Right ventricle myocardium superior (tissue), 1 donor: ENCODE measurements at regions of chr3 and their contacts with region 1.

Region 1: GRCh38 chr3:171459942-171460724 is at the start of gene TNIK:
- DNase-seq: peak; percentile 95
- ATAC-seq: peak; percentile 95
- total RNA-seq, gene TNIK: 22.5 TPM

Region 2: GRCh38 chr3:171334465-171334811 is 125.7 kb before region 1 on chr3:
- intact Hi-C with region 1: no loop called
- DNase-seq: peak; percentile 65
- ATAC-seq: peak; percentile 88

Region 3: DNA sequence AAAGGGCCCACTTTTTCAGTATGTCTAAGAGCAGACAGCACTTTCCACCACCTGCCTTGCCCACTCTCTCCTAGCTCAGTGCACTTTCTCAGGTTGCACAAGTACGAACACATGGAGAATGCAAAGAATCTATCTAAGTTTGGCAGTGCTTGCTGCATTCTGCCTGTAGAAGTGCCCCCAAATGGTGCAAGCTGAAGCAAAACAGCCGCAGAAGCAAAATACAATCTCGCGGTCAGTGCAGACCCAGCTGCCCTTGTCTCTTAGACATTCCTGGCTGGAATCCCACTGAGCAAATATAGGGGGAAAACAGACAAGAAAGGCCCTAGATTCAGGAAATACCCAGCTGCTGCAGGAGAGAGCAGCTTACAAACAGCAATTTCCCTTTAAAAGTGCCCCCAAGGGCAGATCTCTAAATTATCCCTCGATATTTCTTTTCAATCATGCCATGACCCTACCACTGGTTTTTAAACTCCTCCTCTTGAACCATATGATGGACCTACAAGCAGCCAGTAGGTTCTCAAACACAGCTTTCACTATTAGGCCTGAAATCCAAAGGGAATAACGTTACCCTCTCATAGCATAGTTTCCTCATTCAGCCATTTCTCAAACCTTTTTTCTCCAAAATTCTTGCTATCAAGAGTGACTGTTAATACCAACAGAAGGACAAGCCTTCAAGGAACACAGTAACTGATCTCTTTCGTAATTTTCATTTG is 66.9 kb before region 1 on chr3:
- intact Hi-C with region 1: no loop called
- DNase-seq: no peak
- ATAC-seq: peak; percentile 21

Region 4: GRCh38 chr3:171556148-171557145 is 96.3 kb after region 1 on chr3:
- intact Hi-C with region 1: loop called (anchors 10 kb)
- DNase-seq: peak; percentile 54
- ATAC-seq: peak; percentile 90

Region 5: GRCh38 chr3:171660188-171660587 is 200.1 kb after region 1 on chr3:
- intact Hi-C with region 1: no loop called
- DNase-seq: no peak
- ATAC-seq: peak; percentile 40